ENCODE measurements at regions of chr4 and their contacts with region 1.

Region 1: DNA sequence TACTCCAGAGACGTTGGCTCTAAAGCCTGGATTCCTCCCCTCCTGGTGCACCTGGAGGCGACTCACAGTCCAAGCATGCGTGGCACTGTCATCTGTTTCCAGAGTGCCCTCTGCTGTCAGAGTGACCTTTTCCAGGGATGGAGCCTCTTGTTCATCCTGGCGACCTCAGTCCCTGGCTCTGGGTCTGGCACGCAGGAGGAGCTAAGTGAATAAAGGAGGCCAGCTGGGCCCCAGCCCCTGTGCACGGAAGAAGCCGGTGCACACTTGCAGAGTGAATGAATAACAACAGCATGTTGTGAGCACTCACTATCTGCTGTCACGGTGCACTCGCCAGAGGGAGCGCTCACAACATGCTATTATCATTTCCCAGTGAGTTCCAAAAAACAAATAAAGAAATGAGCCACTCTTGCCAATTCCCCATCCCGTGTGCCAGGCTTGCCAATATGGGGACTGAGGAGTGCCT is 27.8 kb upstream of the PSAPL1 start:
- DNase-seq: peak; percentile 50 to 82 (median 71)
- H3K4me3 ChIP-seq: no peak overlapping the region
- H3K27ac ChIP-seq: peak overlapping the region in 21 of 59 donors; percentile 12 to 82 (median 48)
- H3K27me3 ChIP-seq: no peaks in the 10 kb centered on the region
- CTCF ChIP-seq: peak; percentile 39 to 91 (median 72)

Region 2: DNA sequence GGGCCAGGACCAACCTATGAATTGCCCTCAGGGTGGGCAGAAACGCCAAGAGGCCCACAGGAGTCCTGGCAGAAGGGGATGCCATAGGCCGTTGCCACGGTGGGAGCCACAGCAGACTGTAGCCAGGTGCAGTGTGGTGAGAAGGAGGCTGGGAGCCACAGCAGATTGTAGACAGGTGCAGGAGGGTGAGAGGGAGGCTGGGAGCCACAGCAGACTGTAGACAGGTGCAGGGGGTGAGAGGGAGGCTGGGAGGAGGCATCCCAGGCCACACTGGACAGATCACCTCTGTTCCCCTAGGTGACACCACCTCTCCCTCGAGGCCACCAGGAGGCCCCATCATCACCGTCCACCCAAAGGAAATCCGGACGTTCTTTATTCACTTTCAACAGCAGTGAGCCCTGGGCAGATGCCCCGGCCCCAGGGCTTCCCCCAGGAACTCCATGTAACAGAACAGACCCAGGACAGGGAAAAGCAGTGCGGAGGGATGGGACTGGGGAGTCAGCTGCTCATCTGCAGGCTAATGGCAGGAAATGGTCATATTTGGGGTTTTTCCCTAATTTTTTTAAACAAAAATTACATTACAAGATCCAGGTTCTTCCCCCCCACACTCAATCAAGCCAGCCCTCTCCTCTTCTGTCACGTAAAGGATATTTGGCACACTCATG is 841.5 kb before region 1 on chr4:
- intact Hi-C with region 1: no loop called
- DNase-seq: peak in 2 of 10 donors; percentile 21 to 28
- H3K4me3 ChIP-seq: no peak overlapping the region
- H3K27ac ChIP-seq: no peak overlapping the region
- H3K27me3 ChIP-seq: no peaks in the 10 kb centered on the region
- CTCF ChIP-seq: no peak

Region 3: GRCh38 chr4:7192252-7193029 is 270.1 kb before region 1 on chr4 and contains the start of gene SORCS2:
- intact Hi-C with region 1: loop called (anchors 2 to 5 kb)
- DNase-seq: peak; percentile 43 to 90 (median 65)
- H3K4me3 ChIP-seq: peak within 1 kb of the TSS; percentile 44 to 82 (median 67)
- H3K27ac ChIP-seq: peak within 1 kb of the TSS in 22 of 59 donors; percentile 3 to 78 (median 33)
- H3K27me3 ChIP-seq: peaks cover 0 to 35% (median 0%) of the 10 kb centered on the region in 45 donors
- CTCF ChIP-seq: peak; percentile 15 to 94 (median 73)
- total RNA-seq, gene SORCS2: 17.6 to 63.7 (median 32.1) TPM

Region 4: GRCh38 chr4:7295911-7296660 is 166.5 kb before region 1 on chr4:
- intact Hi-C with region 1: loop called in 1 of 2 experiments (anchors 5 kb)
- DNase-seq: peak in 8 of 10 donors; percentile 53 to 79 (median 68)
- H3K4me3 ChIP-seq: peak overlapping the region in 12 of 59 donors; percentile 7 to 53 (median 20)
- H3K27ac ChIP-seq: peak overlapping the region in 52 of 59 donors; percentile 26 to 88 (median 77)
- H3K27me3 ChIP-seq: no peaks in the 10 kb centered on the region
- CTCF ChIP-seq: peak; percentile 14 to 82 (median 67)

Region 5: GRCh38 chr4:7365462-7366179 is 96.9 kb before region 1 on chr4:
- intact Hi-C with region 1: loop called in 1 of 2 experiments (anchors 5 kb)
- DNase-seq: peak; percentile 75 to 95 (median 89)
- H3K4me3 ChIP-seq: peak overlapping the region in 29 of 59 donors; percentile 14 to 56 (median 36)
- H3K27ac ChIP-seq: peak overlapping the region; percentile 28 to 98 (median 89)
- H3K27me3 ChIP-seq: peaks cover 0 to 2% (median 0%) of the 10 kb centered on the region in 45 donors
- CTCF ChIP-seq: peak in 6 of 56 donors; percentile 7 to 21 (median 10)

Region 6: DNA sequence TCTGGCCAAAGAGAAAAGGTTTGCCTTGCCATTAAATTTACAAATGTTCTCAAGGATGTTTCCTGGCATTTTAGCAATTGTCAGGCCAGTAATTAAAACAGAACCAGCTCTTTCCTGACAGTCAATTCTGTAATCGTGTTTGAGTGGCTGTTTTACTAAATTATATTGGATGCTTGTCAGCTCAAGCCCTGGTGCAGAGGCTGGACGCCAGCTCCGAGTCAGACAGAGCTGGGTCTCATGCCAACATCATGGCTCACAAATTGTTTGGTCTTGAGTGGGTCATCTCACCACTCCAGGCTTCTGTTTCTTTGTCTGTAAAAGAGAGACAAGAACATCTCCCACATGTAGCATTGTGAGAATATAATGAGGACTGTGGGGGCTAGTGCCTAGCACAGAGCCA is 162.5 kb after region 1 on chr4:
- intact Hi-C with region 1: loop called in 1 of 2 experiments (anchors 5 kb)
- DNase-seq: peak in 7 of 10 donors; percentile 28 to 69 (median 55)
- H3K4me3 ChIP-seq: peak overlapping the region in 9 of 59 donors; percentile 1 to 29 (median 13)
- H3K27ac ChIP-seq: peak overlapping the region in 2 of 59 donors; percentile 5 to 13
- H3K27me3 ChIP-seq: peaks cover 0 to 4% (median 0%) of the 10 kb centered on the region in 45 donors
- CTCF ChIP-seq: no peak

Region 7: DNA sequence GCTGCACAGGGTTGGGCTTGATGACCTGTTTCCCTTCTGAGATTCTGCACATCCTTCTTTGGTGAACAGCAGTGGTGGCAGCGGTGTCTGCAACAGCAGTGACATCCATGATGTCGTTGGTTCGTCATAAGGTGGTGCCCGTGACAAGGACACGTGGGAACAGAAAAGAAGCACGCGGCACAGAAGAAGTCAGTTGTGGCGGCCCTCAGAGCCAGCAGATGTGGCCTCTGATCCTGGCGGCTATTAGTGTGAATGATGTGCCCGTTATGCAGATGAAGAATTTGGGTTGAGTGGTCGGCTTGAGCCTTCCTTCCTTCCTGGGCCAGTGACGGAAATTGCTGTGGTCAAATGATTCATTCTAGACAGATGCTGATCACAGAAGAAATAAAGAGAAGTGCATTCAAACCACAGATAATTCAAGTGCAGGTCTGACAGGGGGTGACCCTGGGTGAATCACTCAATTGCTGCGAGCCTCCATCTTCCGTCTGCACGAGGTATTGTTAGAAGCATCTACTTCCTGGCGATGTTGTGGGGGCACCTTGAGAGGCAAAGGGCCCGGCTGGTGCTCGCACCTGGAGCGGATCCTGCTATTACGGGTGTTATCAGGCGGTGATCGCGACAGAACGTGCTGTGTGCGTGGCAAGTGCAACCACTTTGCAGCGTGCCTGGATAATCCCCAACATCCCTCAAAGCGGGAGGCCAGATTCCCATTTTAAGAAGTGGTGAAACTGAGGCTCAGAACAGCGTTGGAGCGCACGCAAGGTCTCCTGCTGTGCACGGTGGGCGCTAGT is 187.4 kb after region 1 on chr4:
- intact Hi-C with region 1: loop called in 1 of 2 experiments (anchors 10 kb)
- DNase-seq: peak in 1 of 10 donors; percentile 43
- H3K4me3 ChIP-seq: no peak overlapping the region
- H3K27ac ChIP-seq: no peak overlapping the region
- H3K27me3 ChIP-seq: no peaks in the 10 kb centered on the region
- CTCF ChIP-seq: no peak

Region 8: GRCh38 chr4:7719354-7720174 is 257.0 kb after region 1 on chr4:
- intact Hi-C with region 1: loop called (anchors 1 to 2 kb)
- DNase-seq: peak; percentile 49 to 83 (median 66)
- H3K4me3 ChIP-seq: peak overlapping the region in 35 of 59 donors; percentile 2 to 57 (median 28)
- H3K27ac ChIP-seq: no peak overlapping the region
- H3K27me3 ChIP-seq: peaks cover 0 to 5% (median 0%) of the 10 kb centered on the region in 45 donors
- CTCF ChIP-seq: peak; percentile 62 to 95 (median 88)